ENCODE measurements at regions of chr12 and their contacts with region 1.

Region 1: GRCh38 chr12:480831-481816 is 21.4 kb downstream of the B4GALNT3 start:
- DNase-seq: no peak
- ATAC-seq: no peak
- H3K4me3 ChIP-seq: no peak overlapping the region
- H3K27ac ChIP-seq: no peak overlapping the region
- H3K4me1 ChIP-seq: no peaks in the 10 kb centered on the region
- H3K27me3 ChIP-seq: no peaks in the 10 kb centered on the region
- CTCF ChIP-seq: no peak

Region 2: GRCh38 chr12:546921-547845 is 66.1 kb after region 1 on chr12:
- CTCF ChIA-PET with region 1: interaction called, 17 read pairs
- POLR2A ChIA-PET with region 1: no interaction called
- intact Hi-C with region 1: no loop called
- DNase-seq: peak; percentile 67
- ATAC-seq: peak; percentile 88
- H3K4me3 ChIP-seq: no peak overlapping the region
- H3K27ac ChIP-seq: no peak overlapping the region
- H3K4me1 ChIP-seq: no peaks in the 10 kb centered on the region
- H3K27me3 ChIP-seq: no peaks in the 10 kb centered on the region
- CTCF ChIP-seq: peak; percentile 95